HepG2 (cell line): ENCODE measurements at regions of chr3 and their contacts with region 1.

Region 1: GRCh38 chr3:170021083-170021482 is 16.7 kb upstream of the GPR160 start:
- DNase-seq: no peak
- ATAC-seq: peak; percentile 53
- H3K4me3 ChIP-seq: no peak overlapping the region
- H3K27ac ChIP-seq: no peak overlapping the region
- H3K4me1 ChIP-seq: peaks cover 45% of the 10 kb centered on the region
- H3K27me3 ChIP-seq: peaks cover 1 to 5% of the 10 kb centered on the region in 2 experiments; a peak in 2 of 5 replicates
- CTCF ChIP-seq: no peak
- EP300 ChIP-seq: no peak
- POLR2A ChIP-seq: no peak
- RAD21 ChIP-seq: no peak

Region 2: DNA sequence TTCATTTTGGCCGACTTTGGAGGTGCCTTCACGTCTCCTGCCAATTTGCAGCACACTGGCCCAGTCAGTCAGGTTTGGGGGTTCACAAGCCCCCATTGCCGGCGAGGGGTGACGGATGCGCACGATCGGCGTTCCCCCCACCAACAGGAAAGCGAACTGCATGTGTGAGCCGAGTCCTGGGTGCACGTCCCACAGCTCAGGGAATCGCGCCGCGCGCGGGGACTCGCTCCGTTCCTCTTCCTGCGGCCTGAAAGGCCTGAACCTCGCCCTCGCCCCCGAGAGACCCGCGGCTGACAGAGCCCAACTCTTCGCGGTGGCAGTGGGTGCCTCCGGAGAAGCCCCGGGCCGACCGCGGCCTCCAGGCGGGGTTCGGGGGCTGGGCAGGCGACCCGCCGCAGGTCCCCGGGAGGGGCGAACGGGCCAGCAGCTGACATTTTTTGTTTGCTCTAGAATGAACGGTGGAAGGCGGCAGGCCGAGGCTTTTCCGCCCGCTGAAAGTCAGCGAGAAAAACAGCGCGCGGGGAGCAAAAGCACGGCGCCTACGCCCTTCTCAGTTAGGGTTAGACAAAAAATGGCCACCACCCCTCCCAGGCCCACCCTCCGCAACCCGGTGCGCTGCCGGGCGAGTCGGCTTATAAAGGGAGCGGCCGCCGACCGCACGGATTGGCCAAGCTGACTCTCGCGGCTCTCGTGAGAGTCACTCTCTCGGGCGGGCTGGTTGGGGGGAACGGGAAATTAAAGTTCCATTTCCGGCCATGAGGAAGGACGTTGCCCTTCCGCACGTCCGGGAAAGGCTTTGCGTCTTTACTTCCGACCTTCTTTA is 256.4 kb before region 1 on chr3 and contains the start of gene TERC:
- CTCF ChIA-PET with region 1: no interaction called
- POLR2A ChIA-PET with region 1: no interaction called
- in situ Hi-C with region 1: no loop called
- intact Hi-C with region 1: loop called (anchors 10 kb)
- DNase-seq: peak; percentile 79
- ATAC-seq: peak; percentile 85
- H3K4me3 ChIP-seq: peak within 1 kb of the TSS; percentile 62 to 80 (median 72)
- H3K27ac ChIP-seq: peak within 1 kb of the TSS; percentile 79
- H3K4me1 ChIP-seq: no peaks in the 10 kb centered on the region; the same call in 1 of the 2 replicates
- H3K27me3 ChIP-seq: 0 out of 5 replicates have a peak, but pooled peaks cover 0 to 4% of the 10 kb centered on the region in 2 experiments
- CTCF ChIP-seq: no peak
- EP300 ChIP-seq: no peak
- POLR2A ChIP-seq: peak; percentile 82 to 96
- RAD21 ChIP-seq: no peak
- total RNA-seq, gene TERC: 8.4 and 74.6 TPM in 2 replicates

Region 3: DNA sequence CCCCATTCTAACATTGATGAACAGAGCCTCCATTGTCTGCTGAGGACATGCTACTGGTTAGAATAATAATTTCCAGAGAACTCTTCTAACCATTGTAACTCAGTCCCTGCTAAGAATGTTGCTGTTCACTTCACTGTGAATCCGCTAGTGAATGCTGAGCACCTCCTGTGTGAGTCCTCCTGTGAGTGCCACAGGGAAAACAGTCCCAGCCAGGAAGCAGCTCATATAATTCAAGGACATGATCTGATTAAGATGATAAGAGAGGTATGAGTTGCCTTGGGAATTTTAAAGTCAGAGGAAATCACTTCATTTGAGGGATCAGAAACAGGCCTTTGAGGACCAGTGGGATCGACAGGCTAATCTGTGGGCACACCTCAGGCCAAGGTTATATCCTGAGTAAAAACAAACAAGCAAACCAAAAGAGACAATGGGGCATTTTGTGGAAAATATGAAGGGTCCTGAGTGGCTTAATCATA is 17.2 kb before region 1 on chr3:
- CTCF ChIA-PET with region 1: no interaction called
- POLR2A ChIA-PET with region 1: no interaction called
- in situ Hi-C with region 1: no loop called
- intact Hi-C with region 1: loop called (anchors 1 kb)
- DNase-seq: peak; percentile 91
- ATAC-seq: peak; percentile 89
- H3K4me3 ChIP-seq: no peak overlapping the region
- H3K27ac ChIP-seq: peak overlapping the region; percentile 66
- H3K4me1 ChIP-seq: peaks cover 60% of the 10 kb centered on the region
- H3K27me3 ChIP-seq: no peaks in the 10 kb centered on the region
- CTCF ChIP-seq: 0 out of 2 replicates have a peak, but pooled peaks have one; percentile 2
- EP300 ChIP-seq: peak in 1 of 2 experiments; percentile 87; a peak in 2 of 4 replicates
- POLR2A ChIP-seq: no peak
- RAD21 ChIP-seq: no peak

Region 4: GRCh38 chr3:170632780-170633179 is 611.7 kb after region 1 on chr3:
- CTCF ChIA-PET with region 1: no interaction called
- POLR2A ChIA-PET with region 1: no interaction called
- in situ Hi-C with region 1: no loop called
- intact Hi-C with region 1: no loop called
- DNase-seq: no peak
- ATAC-seq: no peak
- H3K4me3 ChIP-seq: no peak overlapping the region
- H3K27ac ChIP-seq: no peak overlapping the region
- H3K4me1 ChIP-seq: 0 out of 2 replicates have a peak, but pooled peaks cover 6% of the 10 kb centered on the region
- H3K27me3 ChIP-seq: no peaks in the 10 kb centered on the region
- CTCF ChIP-seq: no peak
- EP300 ChIP-seq: no peak
- POLR2A ChIP-seq: no peak
- RAD21 ChIP-seq: no peak